Activated CD8-positive, alpha-beta T cell treated with anti-CD3 and anti-CD28 coated beads for 36 hours (primary cell): ENCODE measurements at regions of chr2 and their contacts with region 1.

Region 1: GRCh38 chr2:160429248-160430000 is 64.2 kb downstream of the RBMS1 start:
- DNase-seq: no peak
- ATAC-seq: peak; percentile 63
- H3K4me3 Mint-ChIP-seq: peak overlapping the region; percentile 15
- H3K27ac Mint-ChIP-seq: peak overlapping the region; percentile 92
- H3K4me1 Mint-ChIP-seq: peaks cover 66% of the 10 kb centered on the region
- H3K27me3 Mint-ChIP-seq: no peaks in the 10 kb centered on the region
- CTCF ChIP-seq: peak; percentile 67

Region 2: DNA sequence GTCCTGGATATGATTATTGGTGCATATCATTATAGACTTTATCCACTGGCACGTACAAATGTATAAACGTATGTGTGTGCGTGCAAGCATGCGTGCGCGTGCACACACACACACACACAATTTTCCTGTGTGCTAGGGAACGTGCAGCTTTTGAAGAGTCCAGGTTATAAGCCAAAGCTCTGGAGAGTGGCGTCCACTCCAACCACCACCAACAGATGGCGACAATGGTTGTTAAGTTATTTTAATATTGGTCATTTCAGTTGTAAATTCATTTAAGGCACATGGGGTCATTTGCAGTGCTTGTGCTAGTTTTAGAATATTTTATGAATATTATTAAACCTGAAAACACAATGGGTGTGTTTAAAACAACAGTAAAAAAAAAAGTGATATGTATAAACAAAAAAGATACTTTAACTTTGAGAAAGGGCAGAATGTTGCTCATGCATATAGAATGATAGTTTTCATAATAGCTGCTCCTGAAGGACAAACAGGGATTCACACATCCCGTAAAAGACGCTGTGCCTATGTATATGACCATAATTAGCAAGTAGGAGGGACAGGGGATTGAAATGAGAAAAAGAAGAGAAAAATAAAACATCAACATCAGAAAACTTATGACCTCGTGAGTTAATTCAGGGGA is 105.1 kb before region 1 on chr2:
- CTCF ChIA-PET with region 1: interaction called, 29 read pairs
- POLR2A ChIA-PET with region 1: interaction called, 3 read pairs
- intact Hi-C with region 1: no loop called
- DNase-seq: peak; percentile 74
- ATAC-seq: no peak
- H3K4me3 Mint-ChIP-seq: no peak overlapping the region
- H3K27ac Mint-ChIP-seq: no peak overlapping the region
- H3K4me1 Mint-ChIP-seq: peaks cover 81% of the 10 kb centered on the region
- H3K27me3 Mint-ChIP-seq: no peaks in the 10 kb centered on the region
- CTCF ChIP-seq: peak; percentile 77

Region 3: GRCh38 chr2:160417745-160418397 is 11.6 kb before region 1 on chr2:
- CTCF ChIA-PET with region 1: interaction called, 18 read pairs
- POLR2A ChIA-PET with region 1: interaction called, 3 read pairs
- intact Hi-C with region 1: no loop called
- DNase-seq: peak; percentile 48
- ATAC-seq: peak; percentile 90
- H3K4me3 Mint-ChIP-seq: peak overlapping the region; percentile 11
- H3K27ac Mint-ChIP-seq: peak overlapping the region; percentile 57
- H3K4me1 Mint-ChIP-seq: peaks cover 67% of the 10 kb centered on the region
- H3K27me3 Mint-ChIP-seq: no peaks in the 10 kb centered on the region
- CTCF ChIP-seq: no peak

Region 4: GRCh38 chr2:160493227-160494028 is 64.0 kb after region 1 on chr2 and contains the start of gene RBMS1:
- CTCF ChIA-PET with region 1: interaction called, 5 read pairs
- POLR2A ChIA-PET with region 1: no interaction called
- intact Hi-C with region 1: loop called (anchors 5 kb)
- DNase-seq: peak; percentile 56
- ATAC-seq: peak; percentile 32
- H3K4me3 Mint-ChIP-seq: peak within 1 kb of the TSS; percentile 93
- H3K27ac Mint-ChIP-seq: peak within 1 kb of the TSS; percentile 94
- H3K4me1 Mint-ChIP-seq: peaks cover 43% of the 10 kb centered on the region
- H3K27me3 Mint-ChIP-seq: no peaks in the 10 kb centered on the region
- CTCF ChIP-seq: no peak
- total RNA-seq, gene RBMS1: 35.8 to 38.6 TPM